ENCODE measurements at regions of chr12 and their contacts with region 1.

Region 1: GRCh38 chr12:69639400-69640016 is 28.8 kb upstream of the LRRC10 start:
- DNase-seq: peak; percentile 43
- H3K4me3 ChIP-seq: no peak overlapping the region
- H3K27ac ChIP-seq: no peak overlapping the region
- H3K4me1 ChIP-seq: no peaks in the 10 kb centered on the region
- H3K27me3 ChIP-seq: no peaks in the 10 kb centered on the region
- CTCF ChIP-seq: peak; percentile 85 to 90

Region 2: DNA sequence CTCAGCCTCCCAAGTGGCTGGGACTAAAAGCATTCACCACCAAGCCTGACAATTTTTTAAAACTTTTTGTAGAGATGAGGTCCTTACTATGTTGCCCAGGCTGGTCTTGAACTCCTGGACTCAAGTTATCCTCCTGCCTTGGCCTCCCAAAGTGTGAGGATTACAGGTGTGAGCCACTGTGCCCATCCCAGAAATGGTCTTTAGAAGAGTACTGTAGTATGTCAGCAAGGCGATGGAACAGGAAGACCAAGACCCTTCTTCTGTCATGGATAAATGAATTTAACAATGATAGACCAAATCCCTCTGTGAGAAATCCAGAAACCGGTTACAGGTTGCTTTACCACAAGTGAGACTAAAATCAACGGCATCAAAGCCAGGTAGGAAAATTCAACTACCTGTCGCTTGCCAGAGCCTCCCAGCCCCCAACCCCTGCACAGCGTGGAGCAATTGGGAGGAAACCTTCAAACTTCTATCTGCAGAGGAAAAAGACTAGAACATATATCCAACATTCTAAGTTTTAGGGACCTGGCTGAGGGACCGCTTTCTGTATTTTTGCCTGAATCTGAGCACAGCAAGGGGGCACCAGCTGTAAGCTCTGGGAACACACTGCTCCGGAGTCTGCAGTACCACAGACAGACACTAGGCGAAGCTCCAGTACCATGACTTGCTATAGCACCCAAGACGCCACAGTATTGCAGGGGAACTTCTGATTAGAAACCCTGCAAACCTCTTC is 348.8 kb before region 1 on chr12:
- CTCF ChIA-PET with region 1: no interaction called
- dilution Hi-C with region 1: no loop called
- in situ Hi-C with region 1: no loop called
- intact Hi-C with region 1: loop called (anchors 2 kb)
- DNase-seq: peak; percentile 68
- H3K4me3 ChIP-seq: no peak overlapping the region
- H3K27ac ChIP-seq: no peak overlapping the region
- H3K4me1 ChIP-seq: no peaks in the 10 kb centered on the region
- H3K27me3 ChIP-seq: peaks cover 1% of the 10 kb centered on the region
- CTCF ChIP-seq: peak; percentile 98 to 99

Region 3: GRCh38 chr12:69341328-69341727 is 298.2 kb before region 1 on chr12:
- CTCF ChIA-PET with region 1: no interaction called
- dilution Hi-C with region 1: no loop called
- in situ Hi-C with region 1: no loop called
- intact Hi-C with region 1: no loop called
- DNase-seq: peak; percentile 25
- H3K4me3 ChIP-seq: no peak overlapping the region
- H3K27ac ChIP-seq: no peak overlapping the region
- H3K4me1 ChIP-seq: no peaks in the 10 kb centered on the region
- H3K27me3 ChIP-seq: no peaks in the 10 kb centered on the region
- CTCF ChIP-seq: no peak

Region 4: DNA sequence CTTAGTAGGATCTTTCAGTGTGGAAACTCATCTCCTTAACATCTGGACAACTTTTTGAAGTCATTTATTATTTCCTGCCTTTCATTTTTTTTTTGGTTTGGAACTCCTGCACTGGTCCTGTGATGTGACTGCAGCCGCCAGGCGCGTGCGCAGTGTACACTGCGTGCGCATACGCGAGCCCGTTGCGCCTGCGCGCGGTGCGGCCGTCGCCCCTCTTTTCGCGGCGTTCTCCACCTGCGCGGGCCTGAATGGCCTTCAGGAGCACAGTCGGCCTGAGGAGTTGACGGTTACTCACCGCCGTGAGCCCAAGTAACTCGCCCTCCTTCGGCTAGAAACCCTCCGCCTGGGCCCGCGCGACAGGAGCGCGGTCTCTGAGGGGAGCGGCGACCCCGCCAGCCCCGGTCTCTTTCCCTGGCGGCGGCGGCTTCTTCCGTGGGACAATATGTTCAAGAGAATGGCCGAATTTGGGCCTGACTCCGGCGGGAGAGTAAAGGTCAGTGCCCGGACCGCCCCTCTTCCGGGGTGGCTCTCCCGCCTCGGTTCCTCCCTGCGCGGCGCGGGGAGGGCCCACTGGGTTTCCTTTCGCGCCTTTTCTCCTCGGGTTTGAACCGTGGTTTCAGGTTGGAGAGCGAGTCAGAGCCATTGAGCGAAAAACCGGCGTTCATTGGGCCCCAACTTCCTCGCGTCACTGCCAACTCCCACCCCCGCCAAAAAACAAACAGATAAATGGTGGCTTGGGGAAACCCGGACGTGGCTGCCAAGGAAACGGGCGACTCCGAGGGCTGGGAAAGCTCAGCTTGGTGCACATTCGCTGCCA is 279.8 kb before region 1 on chr12 and contains the start of gene YEATS4:
- CTCF ChIA-PET with region 1: no interaction called
- dilution Hi-C with region 1: no loop called
- in situ Hi-C with region 1: no loop called
- intact Hi-C with region 1: loop called (anchors 1 kb)
- DNase-seq: peak; percentile 98
- H3K4me3 ChIP-seq: peak within 1 kb of the TSS; percentile 44 to 77 (median 74)
- H3K27ac ChIP-seq: peak within 1 kb of the TSS; percentile 97
- H3K4me1 ChIP-seq: peaks cover 8% of the 10 kb centered on the region
- H3K27me3 ChIP-seq: no peaks in the 10 kb centered on the region
- CTCF ChIP-seq: no peak
- total RNA-seq, gene YEATS4: 18.2 to 19.7 TPM

Region 5: GRCh38 chr12:69388371-69388770 is 251.1 kb before region 1 on chr12:
- CTCF ChIA-PET with region 1: interaction called, 4 read pairs
- dilution Hi-C with region 1: no loop called
- in situ Hi-C with region 1: no loop called
- intact Hi-C with region 1: loop called (anchors 1 kb)
- DNase-seq: peak; percentile 37
- H3K4me3 ChIP-seq: no peak overlapping the region
- H3K27ac ChIP-seq: no peak overlapping the region
- H3K4me1 ChIP-seq: peaks cover 6% of the 10 kb centered on the region
- H3K27me3 ChIP-seq: no peaks in the 10 kb centered on the region
- CTCF ChIP-seq: peak; percentile 50 to 56

Region 6: GRCh38 chr12:69602954-69603353 is 36.6 kb before region 1 on chr12:
- CTCF ChIA-PET with region 1: no interaction called
- dilution Hi-C with region 1: no loop called
- in situ Hi-C with region 1: no loop called
- intact Hi-C with region 1: no loop called
- DNase-seq: no peak
- H3K4me3 ChIP-seq: no peak overlapping the region
- H3K27ac ChIP-seq: no peak overlapping the region
- H3K4me1 ChIP-seq: no peaks in the 10 kb centered on the region
- H3K27me3 ChIP-seq: no peaks in the 10 kb centered on the region
- CTCF ChIP-seq: no peak

Region 7: GRCh38 chr12:69738351-69739286 is 99.1 kb after region 1 on chr12 and contains the start of gene RAB3IP:
- CTCF ChIA-PET with region 1: no interaction called
- dilution Hi-C with region 1: no loop called
- in situ Hi-C with region 1: no loop called
- intact Hi-C with region 1: loop called (anchors 2 kb)
- DNase-seq: peak; percentile 86
- H3K4me3 ChIP-seq: peak within 1 kb of the TSS; percentile 88 to 97 (median 96)
- H3K27ac ChIP-seq: peak within 1 kb of the TSS; percentile 95
- H3K4me1 ChIP-seq: peaks cover 6% of the 10 kb centered on the region
- H3K27me3 ChIP-seq: no peaks in the 10 kb centered on the region
- CTCF ChIP-seq: peak; percentile 16 to 60
- total RNA-seq, gene RAB3IP: 22.3 to 33.1 TPM

Measured in mammary epithelial cell (primary cell).